Caco-2 (cell line): ENCODE measurements at regions of chr2 and their contacts with region 1.

Region 1: DNA sequence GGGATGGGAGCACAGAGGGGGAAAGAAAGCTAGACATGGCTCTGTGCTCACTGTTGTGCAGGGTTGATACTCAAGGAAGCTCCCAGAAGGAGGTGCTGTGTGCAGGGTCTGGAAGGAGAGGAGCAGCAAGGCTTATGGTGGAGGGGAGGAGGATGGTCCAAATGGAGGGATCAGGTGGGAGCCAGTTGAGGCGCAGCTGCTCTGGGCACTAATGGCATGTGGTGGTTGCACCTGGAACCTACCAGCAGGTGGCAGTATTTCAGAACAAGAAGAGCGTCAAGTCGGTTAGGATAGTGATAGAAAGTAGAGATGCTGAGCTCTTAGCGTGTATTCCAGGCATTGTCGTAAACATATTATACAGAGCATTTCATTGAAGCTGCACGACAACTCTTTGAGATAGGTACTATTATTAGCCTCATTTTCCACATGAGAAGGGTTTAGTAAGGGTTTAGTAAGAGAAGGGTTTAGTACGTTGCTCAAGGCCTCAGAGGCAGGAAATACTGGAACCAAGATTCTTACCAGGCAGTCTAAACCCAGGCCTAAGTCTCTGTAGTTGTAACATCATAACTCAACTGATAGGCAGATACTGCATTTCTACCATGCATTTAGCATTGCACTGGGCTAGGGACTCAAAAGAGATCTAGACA is 223.7 kb downstream of the CYP26B1 start:
- DNase-seq: peak; percentile 71 to 76
- H3K4me3 ChIP-seq: no peak overlapping the region
- H3K4me3 Mint-ChIP-seq: no peak overlapping the region
- H3K27ac Mint-ChIP-seq: no peak overlapping the region
- H3K4me1 ChIP-seq: peaks cover 6% of the 10 kb centered on the region; the same call in 1 of the 2 replicates
- H3K4me1 Mint-ChIP-seq: no peaks in the 10 kb centered on the region
- H3K27me3 ChIP-seq: no peaks in the 10 kb centered on the region
- H3K27me3 Mint-ChIP-seq: no peaks in the 10 kb centered on the region
- CTCF ChIP-seq: peak; percentile 81 to 89

Region 2: DNA sequence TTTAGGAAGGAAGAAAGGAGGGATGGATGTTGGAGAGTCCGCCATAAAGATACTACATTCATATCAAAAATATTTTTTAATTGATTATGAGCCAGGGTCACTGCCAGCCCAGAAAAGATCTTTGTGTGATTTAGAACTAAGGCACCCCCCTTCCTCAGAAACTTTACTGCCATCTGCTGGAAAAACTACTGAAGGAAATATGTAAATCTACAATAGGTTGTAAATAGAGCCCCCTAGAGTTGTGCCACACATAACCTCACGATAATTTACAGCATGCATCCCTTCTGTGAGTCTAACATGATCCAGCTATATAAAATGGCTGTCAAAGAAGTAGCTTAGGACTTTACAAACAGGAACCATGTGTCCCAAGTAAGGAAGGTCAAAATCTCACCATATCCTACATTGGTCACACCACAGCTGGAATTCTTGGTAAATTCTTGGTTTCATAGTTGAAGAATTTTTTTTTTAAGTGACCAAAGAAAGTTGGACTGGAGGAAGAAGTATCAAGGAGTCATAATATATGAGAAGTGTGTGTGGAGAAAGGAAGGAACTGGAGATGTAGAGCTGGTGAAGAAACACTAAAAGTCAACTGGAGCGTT is 71.2 kb after region 1 on chr2:
- CTCF ChIA-PET with region 1: interaction called, 6 read pairs
- POLR2A ChIA-PET with region 1: no interaction called
- intact Hi-C with region 1: loop called (anchors 1 kb)
- DNase-seq: peak in 1 of 2 experiments; percentile 23
- H3K4me3 ChIP-seq: no peak overlapping the region
- H3K4me3 Mint-ChIP-seq: no peak overlapping the region
- H3K27ac Mint-ChIP-seq: no peak overlapping the region
- H3K4me1 ChIP-seq: no peaks in the 10 kb centered on the region
- H3K4me1 Mint-ChIP-seq: no peaks in the 10 kb centered on the region
- H3K27me3 ChIP-seq: no peaks in the 10 kb centered on the region
- H3K27me3 Mint-ChIP-seq: no peaks in the 10 kb centered on the region
- CTCF ChIP-seq: peak; percentile 53 to 58

Region 3: GRCh38 chr2:72104821-72105588 is 181.0 kb after region 1 on chr2:
- CTCF ChIA-PET with region 1: interaction called, 3 read pairs
- POLR2A ChIA-PET with region 1: no interaction called
- intact Hi-C with region 1: loop called (anchors 1 kb)
- DNase-seq: peak; percentile 28 to 38
- H3K4me3 ChIP-seq: no peak overlapping the region
- H3K4me3 Mint-ChIP-seq: no peak overlapping the region
- H3K27ac Mint-ChIP-seq: no peak overlapping the region
- H3K4me1 ChIP-seq: no peaks in the 10 kb centered on the region
- H3K4me1 Mint-ChIP-seq: no peaks in the 10 kb centered on the region
- H3K27me3 ChIP-seq: no peaks in the 10 kb centered on the region
- H3K27me3 Mint-ChIP-seq: peaks cover 18% of the 10 kb centered on the region
- CTCF ChIP-seq: peak; percentile 12 to 41